Caco-2 (cell line): ENCODE measurements at regions of chr1 and their contacts with region 1.

Region 1: GRCh38 chr1:210328746-210329503 is at the start of gene HHAT:
- DNase-seq: peak; percentile 78 to 85
- H3K4me3 ChIP-seq: peak within 1 kb of the TSS; percentile 61
- H3K4me3 Mint-ChIP-seq: peak within 1 kb of the TSS; percentile 83
- H3K27ac Mint-ChIP-seq: peak within 1 kb of the TSS; percentile 65
- H3K4me1 ChIP-seq: peaks cover 6% of the 10 kb centered on the region; the same call in 1 of the 2 replicates
- H3K4me1 Mint-ChIP-seq: peaks cover 7% of the 10 kb centered on the region
- H3K27me3 ChIP-seq: no peaks in the 10 kb centered on the region
- H3K27me3 Mint-ChIP-seq: no peaks in the 10 kb centered on the region
- CTCF ChIP-seq: no peak
- total RNA-seq, gene HHAT: 3.9 and 4.3 TPM in 2 replicates

Region 2: DNA sequence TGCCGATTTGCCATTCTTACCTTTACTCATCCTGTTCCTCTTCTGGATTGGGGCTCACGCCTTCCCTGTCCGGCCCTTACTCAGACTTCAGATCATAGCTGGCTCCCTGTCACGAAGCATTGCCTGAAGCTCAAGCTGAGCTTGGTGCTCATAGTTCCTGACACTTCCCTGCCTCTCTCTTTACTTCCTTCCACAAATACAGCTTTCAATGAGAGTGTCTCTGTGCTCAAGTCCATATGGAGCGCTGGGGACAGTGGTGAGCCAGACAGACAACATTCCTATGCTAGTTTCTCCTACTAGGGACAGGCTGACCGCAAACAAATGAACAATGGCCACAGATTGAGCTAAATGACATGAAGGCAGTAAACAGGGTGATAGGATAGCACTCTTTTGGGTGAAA is 37.8 kb after region 1 on chr1:
- CTCF ChIA-PET with region 1: no interaction called
- POLR2A ChIA-PET with region 1: interaction called, 3 read pairs
- intact Hi-C with region 1: loop called (anchors 5 kb)
- DNase-seq: peak; percentile 69 to 71
- H3K4me3 ChIP-seq: no peak overlapping the region
- H3K4me3 Mint-ChIP-seq: peak overlapping the region; percentile 32
- H3K27ac Mint-ChIP-seq: peak overlapping the region; percentile 55
- H3K4me1 ChIP-seq: peaks cover 18% of the 10 kb centered on the region
- H3K4me1 Mint-ChIP-seq: peaks cover 25% of the 10 kb centered on the region
- H3K27me3 ChIP-seq: no peaks in the 10 kb centered on the region
- H3K27me3 Mint-ChIP-seq: no peaks in the 10 kb centered on the region
- CTCF ChIP-seq: no peak